ENCODE measurements at regions of chr10 and their contacts with region 1.

Region 1: DNA sequence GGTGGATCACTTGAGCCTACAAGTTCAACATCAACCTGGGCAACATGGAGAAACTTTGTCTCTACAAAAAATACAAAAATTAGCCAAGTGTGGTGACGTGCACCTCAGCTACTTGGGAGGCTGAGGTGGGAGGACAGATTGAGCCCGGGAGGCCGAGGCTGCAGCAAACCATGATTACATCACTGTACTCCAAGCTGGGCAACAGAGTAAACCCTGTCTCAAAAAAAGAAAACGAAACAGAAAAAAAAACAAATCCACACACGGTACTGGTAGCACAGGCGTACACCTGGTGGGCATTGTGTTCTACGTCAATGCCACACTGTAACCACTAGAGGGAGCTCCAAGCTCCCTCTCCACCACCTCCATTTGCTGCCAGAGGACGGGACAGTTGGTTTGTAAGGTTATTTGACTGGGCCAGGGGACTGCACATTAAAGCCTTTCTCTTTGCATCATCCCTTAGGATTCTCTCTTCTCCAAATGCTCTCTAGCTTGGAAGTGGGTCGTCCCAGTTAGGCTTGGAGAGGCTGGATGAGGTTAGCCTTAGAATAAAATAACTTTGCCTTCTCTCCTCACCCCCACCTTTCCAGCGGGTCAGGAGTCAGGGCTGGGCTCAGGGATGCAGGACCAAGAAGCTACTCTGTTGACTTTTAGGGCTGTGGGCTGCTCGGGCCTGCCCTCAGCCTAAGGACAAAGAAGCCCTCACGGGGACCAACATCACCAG is 130.8 kb downstream of the SORBS1 start:
- DNase-seq: peak; percentile 60
- ATAC-seq: peak; percentile 94
- H3K4me3 Mint-ChIP-seq: no peak overlapping the region
- H3K27ac Mint-ChIP-seq: no peak overlapping the region
- H3K4me1 Mint-ChIP-seq: no peaks in the 10 kb centered on the region
- H3K27me3 Mint-ChIP-seq: no peaks in the 10 kb centered on the region

Region 2: DNA sequence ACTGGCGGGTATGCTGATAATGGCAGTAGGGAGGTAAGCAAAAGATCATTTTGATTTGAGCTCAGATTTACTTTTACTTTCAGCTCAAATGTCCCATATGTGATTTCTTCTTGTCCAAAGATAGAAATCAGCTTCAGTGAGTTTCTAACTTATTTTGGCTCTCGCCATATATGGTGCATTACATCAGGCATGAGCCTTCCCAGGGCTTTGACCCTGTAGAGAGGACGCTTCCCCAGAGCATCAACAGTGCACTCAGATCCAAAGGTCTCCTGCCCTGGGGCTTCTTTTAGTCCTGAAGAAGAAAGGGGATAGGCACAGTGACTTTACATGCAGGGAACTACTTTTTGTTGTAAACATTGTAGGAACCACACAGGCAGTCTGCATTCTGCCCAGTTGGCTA is 11.0 kb before region 1 on chr10:
- CTCF ChIA-PET with region 1: interaction called, 15 read pairs
- POLR2A ChIA-PET with region 1: no interaction called
- intact Hi-C with region 1: no loop called
- DNase-seq: no peak
- ATAC-seq: no peak
- H3K4me3 Mint-ChIP-seq: no peak overlapping the region
- H3K27ac Mint-ChIP-seq: no peak overlapping the region
- H3K4me1 Mint-ChIP-seq: no peaks in the 10 kb centered on the region
- H3K27me3 Mint-ChIP-seq: no peaks in the 10 kb centered on the region

Region 3: GRCh38 chr10:95440756-95441546 is 10.6 kb after region 1 on chr10:
- CTCF ChIA-PET with region 1: interaction called, 24 read pairs
- POLR2A ChIA-PET with region 1: no interaction called
- intact Hi-C with region 1: loop called in 1 of 2 experiments (anchors 1 kb)
- DNase-seq: no peak
- ATAC-seq: peak; percentile 51
- H3K4me3 Mint-ChIP-seq: no peak overlapping the region
- H3K27ac Mint-ChIP-seq: no peak overlapping the region
- H3K4me1 Mint-ChIP-seq: peaks cover 6% of the 10 kb centered on the region
- H3K27me3 Mint-ChIP-seq: peaks cover 5% of the 10 kb centered on the region

Region 4: DNA sequence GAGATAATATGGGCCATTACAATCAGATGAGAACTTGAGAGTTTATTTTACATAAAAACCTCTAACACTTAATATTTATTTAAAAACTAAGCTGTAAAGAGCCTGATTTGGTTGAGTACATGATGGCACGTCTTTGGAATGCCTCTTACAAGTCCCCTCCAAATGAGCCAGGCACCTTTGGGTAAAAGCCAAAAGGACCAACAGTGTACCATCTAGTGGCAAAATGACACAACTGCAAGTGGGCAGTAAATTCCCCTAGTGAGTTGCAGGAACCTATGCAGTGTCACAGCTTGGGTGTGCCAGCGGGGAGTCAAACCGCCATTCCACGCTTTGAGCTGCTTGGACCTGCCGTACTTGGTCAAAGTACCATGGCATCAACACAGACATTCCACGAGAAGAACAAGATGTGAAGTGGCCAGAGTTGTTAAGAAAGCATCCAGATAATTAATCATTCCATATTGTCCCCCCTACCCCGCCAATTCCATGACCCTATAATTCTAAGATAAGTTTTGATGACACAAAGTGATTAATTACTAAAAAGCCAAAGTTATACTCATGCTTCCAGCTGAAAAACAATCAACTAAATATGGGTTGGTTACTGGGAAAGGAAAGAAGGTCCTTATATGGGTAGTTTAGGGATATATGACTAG is 15.6 kb after region 1 on chr10:
- CTCF ChIA-PET with region 1: interaction called, 24 read pairs
- POLR2A ChIA-PET with region 1: no interaction called
- intact Hi-C with region 1: loop called in 1 of 2 experiments (anchors 1 kb)
- DNase-seq: peak; percentile 50
- ATAC-seq: peak; percentile 73
- H3K4me3 Mint-ChIP-seq: no peak overlapping the region
- H3K27ac Mint-ChIP-seq: no peak overlapping the region
- H3K4me1 Mint-ChIP-seq: peaks cover 4% of the 10 kb centered on the region
- H3K27me3 Mint-ChIP-seq: peaks cover 6% of the 10 kb centered on the region

Region 5: GRCh38 chr10:95588025-95588424 is 157.6 kb after region 1 on chr10:
- CTCF ChIA-PET with region 1: interaction called, 13 read pairs
- POLR2A ChIA-PET with region 1: no interaction called
- intact Hi-C with region 1: no loop called
- DNase-seq: no peak
- ATAC-seq: no peak
- H3K4me3 Mint-ChIP-seq: no peak overlapping the region
- H3K27ac Mint-ChIP-seq: no peak overlapping the region
- H3K4me1 Mint-ChIP-seq: no peaks in the 10 kb centered on the region
- H3K27me3 Mint-ChIP-seq: peaks cover 9% of the 10 kb centered on the region

Region 6: DNA sequence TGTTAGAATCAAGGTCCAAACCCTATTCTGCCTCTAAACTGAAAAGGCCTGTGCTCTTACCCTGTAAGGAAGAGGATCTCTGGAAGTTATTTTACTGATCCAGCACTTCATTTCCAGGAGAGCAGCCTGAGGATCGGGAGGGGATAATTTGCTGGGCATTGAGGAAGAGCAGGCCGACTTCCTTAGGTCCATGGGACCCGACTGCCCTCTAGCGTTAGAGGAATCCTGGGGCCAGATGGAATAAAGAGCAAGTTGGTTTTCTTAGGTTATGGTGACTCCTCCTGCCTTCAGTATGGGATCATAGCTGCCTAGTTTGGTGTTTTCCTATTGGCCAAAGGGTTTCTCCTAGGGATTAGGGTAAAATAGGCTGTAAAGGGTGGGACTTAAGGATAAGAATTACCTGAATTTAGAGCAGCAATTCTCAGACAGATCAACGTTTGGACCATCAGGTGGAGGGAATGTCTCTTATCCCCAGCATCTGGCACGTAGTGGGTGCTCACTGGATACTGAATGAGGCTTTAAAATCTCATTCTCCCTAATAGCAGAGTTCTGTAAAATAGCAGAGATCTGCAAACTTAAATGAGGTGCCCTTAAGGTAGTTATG is 170.8 kb after region 1 on chr10:
- CTCF ChIA-PET with region 1: interaction called, 92 read pairs
- POLR2A ChIA-PET with region 1: no interaction called
- intact Hi-C with region 1: loop called (anchors 1 kb)
- DNase-seq: peak; percentile 72
- ATAC-seq: peak; percentile 65
- H3K4me3 Mint-ChIP-seq: no peak overlapping the region
- H3K27ac Mint-ChIP-seq: no peak overlapping the region
- H3K4me1 Mint-ChIP-seq: no peaks in the 10 kb centered on the region
- H3K27me3 Mint-ChIP-seq: peaks cover 5% of the 10 kb centered on the region